ENCODE measurements at regions of chr15 and their contacts with region 1.

Region 1: GRCh38 chr15:85296615-85297402 is 83.6 kb upstream of the AKAP13 start:
- DNase-seq: peak; percentile 45
- H3K4me3 ChIP-seq: peak overlapping the region; percentile 45; the same call in 1 of the 2 replicates
- H3K27ac ChIP-seq: no peak overlapping the region
- H3K27me3 ChIP-seq: no peaks in the 10 kb centered on the region
- CTCF ChIP-seq: peak; percentile 80

Region 2: DNA sequence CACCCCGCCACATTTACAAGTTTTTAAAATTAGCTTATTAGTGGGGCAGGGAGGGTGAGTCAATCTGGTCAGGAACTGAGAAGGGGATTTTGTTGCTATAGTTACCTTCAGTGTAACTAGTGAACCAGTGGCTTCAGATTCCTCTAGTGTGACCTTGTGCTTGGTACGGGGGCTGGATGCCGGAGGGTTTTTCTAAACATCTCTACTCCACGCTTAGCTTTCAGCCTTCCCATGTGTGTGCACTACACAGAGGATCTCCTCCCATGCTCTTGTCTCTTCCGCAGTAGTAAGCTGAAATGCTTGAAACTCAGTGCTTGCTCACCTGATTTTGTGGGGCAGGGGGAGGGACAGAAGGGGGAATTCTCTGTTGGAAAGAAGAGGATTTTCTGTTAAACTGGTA is 15.7 kb after region 1 on chr15:
- CTCF ChIA-PET with region 1: interaction called, 21 read pairs
- POLR2A ChIA-PET with region 1: no interaction called
- DNase-seq: no peak
- H3K4me3 ChIP-seq: no peak overlapping the region
- H3K27ac ChIP-seq: peak overlapping the region; percentile 75
- H3K27me3 ChIP-seq: no peaks in the 10 kb centered on the region
- CTCF ChIP-seq: no peak

Region 3: DNA sequence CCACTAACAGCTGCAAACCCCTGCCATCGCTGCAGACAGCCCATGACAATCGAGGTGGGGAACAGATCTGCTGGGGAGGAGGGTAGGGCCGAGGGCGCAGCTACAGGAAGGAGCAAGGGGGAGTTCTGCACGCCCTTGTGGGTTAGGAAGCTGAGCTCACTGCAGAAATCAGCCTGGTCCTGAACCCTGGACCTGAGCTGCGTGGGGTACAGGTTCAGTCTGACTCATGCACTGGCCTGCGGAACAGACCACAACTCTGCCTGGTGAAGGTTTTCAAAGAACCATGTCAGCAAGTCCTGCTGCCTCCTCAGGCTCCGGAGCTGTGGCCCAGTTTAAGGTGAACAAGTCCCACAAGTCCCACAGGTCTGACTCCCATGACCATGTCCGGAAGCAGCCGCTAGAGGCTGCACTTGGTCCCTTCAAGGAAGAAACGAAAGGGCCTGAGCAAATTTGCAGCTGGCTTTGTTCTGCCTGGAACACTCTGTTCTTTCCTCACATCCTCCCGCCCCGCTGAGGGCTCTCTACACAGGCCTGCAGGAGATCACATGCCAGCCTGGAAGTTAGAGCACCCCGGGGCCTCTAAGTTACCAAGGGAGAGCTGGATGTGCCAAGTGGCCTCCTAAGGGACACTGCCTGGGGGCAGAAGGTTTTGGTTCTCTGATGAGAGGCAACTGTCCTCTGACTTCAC is 34.2 kb after region 1 on chr15:
- CTCF ChIA-PET with region 1: interaction called, 12 read pairs
- POLR2A ChIA-PET with region 1: interaction called, 3 read pairs
- DNase-seq: no peak
- H3K4me3 ChIP-seq: no peak overlapping the region
- H3K27ac ChIP-seq: peak overlapping the region; percentile 88
- H3K27me3 ChIP-seq: no peaks in the 10 kb centered on the region
- CTCF ChIP-seq: peak; percentile 80

Region 4: DNA sequence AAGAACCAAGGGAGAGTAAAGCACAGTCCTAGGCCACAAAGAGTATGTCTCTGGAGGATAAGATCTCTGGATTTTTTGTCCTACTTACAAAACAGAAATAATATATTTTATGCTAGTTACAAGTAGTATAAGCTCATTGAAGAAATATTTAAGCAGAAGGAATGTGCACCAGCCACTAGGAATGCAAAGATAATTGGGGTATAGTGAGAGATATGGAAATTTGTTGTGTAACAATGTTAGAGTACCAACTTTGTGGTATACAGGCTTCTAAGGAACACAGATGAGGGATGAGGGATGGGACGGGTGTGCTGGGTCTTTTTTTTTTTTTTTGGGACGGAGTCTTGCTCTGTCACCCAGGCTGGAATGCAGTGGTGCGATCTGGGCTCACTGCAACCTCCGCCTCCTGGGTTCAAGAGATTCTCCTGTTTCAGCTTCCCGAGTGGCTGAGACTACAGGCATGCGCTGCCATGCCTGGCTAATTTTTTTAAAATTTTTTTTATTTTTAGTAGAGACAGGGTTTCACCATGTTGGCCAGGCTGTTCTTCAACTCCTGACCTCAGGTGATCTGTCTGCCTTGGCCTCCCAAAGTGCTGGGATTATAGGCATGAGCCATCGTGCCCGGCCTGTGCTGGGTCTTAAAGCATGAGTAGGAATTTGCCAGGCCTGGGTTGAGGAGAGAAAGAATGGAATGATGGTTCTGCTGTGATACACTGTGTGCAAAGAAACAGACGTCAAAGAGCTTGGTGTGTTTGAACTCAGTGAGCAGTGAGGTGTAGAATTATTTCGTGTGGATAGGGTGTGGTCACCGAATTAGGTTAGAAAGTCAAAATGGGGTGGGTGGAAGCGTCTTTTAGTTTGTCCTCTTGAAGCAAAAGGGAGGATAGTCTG is 110.4 kb after region 1 on chr15:
- CTCF ChIA-PET with region 1: interaction called, 48 read pairs
- POLR2A ChIA-PET with region 1: no interaction called
- DNase-seq: no peak
- H3K4me3 ChIP-seq: no peak overlapping the region
- H3K27ac ChIP-seq: peak overlapping the region; percentile 58
- H3K27me3 ChIP-seq: no peaks in the 10 kb centered on the region
- CTCF ChIP-seq: no peak

Region 5: DNA sequence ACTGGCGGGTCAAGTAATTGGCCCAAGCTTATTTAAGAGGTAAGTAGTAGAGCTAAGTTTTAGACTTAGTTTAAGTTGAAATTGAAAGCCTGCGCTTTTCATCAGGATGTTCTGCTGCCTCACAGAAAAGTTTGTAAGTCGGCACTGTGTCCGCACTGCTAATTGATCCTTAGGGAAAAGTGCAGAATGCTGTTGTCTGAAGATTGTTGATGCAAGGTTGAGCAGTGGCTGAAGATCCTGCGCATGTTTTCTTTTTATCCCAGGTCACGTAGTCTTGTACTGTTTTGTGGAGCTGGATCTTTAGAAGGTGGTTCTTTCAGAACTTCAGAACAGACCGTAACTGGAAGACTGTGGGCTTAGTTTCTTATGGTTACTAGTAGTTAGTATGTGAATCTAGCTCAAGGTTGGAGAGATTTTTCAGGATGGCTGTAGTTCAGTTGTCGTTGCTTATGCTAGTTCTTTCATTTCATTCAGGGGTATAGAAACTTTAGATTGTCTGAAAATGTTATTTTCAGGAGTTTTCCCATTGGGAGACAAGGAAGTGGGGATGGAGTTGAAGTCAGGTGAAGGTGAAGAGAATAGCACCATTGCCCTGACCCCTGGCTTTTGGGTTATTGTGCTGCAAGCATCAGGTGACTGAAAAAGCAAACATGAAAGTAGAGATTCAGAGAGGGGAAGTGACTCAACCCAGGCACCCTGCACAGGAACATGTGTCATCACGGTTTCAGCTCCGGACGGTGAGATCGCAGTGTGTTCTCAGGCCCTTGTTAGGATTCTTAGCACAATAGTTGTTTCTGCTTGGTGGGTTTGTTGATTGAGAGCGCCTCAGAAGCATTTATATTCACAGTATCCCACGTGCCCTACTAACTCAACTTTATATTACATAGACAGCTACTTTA is 116.4 kb after region 1 on chr15:
- CTCF ChIA-PET with region 1: interaction called, 48 read pairs
- POLR2A ChIA-PET with region 1: no interaction called
- DNase-seq: peak; percentile 50
- H3K4me3 ChIP-seq: no peak overlapping the region
- H3K27ac ChIP-seq: peak overlapping the region; percentile 12
- H3K27me3 ChIP-seq: no peaks in the 10 kb centered on the region
- CTCF ChIP-seq: no peak

Region 6: DNA sequence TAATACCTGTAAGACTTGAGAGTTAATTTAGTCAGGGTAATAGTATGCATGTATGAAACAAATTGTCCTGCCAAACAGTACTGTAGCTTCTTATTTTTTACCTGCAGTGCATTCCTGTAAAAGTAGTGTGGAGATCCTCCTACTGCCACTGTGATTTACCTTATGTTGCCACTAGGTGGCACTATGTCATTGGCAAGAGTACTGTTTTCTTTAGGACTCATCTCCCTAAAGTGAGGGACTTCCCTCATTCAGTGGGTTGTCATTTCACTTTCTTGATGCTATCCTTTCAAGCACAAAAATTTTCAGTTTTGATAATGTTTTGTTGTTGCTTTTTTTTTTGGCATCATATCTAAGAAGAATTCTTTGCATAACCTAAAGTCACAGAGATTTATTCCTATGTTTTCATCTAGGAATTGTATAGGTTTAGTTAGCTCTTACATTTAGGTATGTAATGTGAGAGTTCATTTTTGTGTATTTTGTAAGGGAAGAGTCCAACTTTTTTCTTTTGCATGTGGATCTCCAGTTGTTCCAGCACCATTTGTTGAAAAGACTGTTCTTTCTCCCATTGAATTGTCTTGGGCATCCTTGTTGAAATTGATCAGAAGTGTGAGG is 189.3 kb after region 1 on chr15:
- CTCF ChIA-PET with region 1: interaction called, 16 read pairs
- POLR2A ChIA-PET with region 1: no interaction called
- DNase-seq: peak; percentile 58
- H3K4me3 ChIP-seq: no peak overlapping the region
- H3K27ac ChIP-seq: no peak overlapping the region
- H3K27me3 ChIP-seq: no peaks in the 10 kb centered on the region
- CTCF ChIP-seq: peak; percentile 80

Region 7: GRCh38 chr15:85504749-85505676 is 208.2 kb after region 1 on chr15:
- CTCF ChIA-PET with region 1: interaction called, 22 read pairs
- POLR2A ChIA-PET with region 1: no interaction called
- DNase-seq: peak; percentile 24
- H3K4me3 ChIP-seq: no peak overlapping the region
- H3K27ac ChIP-seq: no peak overlapping the region
- H3K27me3 ChIP-seq: no peaks in the 10 kb centered on the region
- CTCF ChIP-seq: peak; percentile 68

Measured in AG04450 (cell line).